Motor neuron (in vitro differentiated cells): ENCODE measurements at regions of chr1 and their contacts with region 1.

Region 1: GRCh38 chr1:78145105-78145580 is 99.4 kb downstream of the GIPC2 start:
- ATAC-seq: peak; percentile 37 to 87 (median 64)
- H3K4me3 ChIP-seq: no peak overlapping the region
- H3K27ac ChIP-seq: no peak overlapping the region
- H3K4me1 ChIP-seq: no peaks in the 10 kb centered on the region

Region 2: DNA sequence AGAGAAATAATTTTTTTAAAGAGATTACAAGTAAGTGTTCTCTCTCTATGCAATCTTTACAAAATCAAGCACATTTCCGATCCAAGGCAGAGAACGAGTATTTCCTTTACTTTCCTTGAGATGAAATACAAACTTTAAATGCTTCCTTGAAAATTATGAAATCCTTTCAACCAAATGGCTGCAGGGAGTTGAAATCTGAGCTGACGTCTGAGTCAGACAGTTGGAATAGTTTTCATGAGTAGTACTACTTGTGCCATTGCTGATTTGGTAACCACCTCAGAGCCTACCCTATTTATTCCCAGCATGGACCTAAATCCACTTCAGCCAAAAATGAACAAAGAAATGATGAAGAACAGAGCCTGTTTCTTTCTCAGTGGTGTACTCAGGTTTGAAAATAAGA is 84.2 kb after region 1 on chr1:
- in situ Hi-C with region 1: no loop called
- ATAC-seq: peak in 1 of 8 experiments; percentile 75
- H3K4me3 ChIP-seq: no peak overlapping the region
- H3K27ac ChIP-seq: no peak overlapping the region
- H3K4me1 ChIP-seq: no peaks in the 10 kb centered on the region

Region 3: DNA sequence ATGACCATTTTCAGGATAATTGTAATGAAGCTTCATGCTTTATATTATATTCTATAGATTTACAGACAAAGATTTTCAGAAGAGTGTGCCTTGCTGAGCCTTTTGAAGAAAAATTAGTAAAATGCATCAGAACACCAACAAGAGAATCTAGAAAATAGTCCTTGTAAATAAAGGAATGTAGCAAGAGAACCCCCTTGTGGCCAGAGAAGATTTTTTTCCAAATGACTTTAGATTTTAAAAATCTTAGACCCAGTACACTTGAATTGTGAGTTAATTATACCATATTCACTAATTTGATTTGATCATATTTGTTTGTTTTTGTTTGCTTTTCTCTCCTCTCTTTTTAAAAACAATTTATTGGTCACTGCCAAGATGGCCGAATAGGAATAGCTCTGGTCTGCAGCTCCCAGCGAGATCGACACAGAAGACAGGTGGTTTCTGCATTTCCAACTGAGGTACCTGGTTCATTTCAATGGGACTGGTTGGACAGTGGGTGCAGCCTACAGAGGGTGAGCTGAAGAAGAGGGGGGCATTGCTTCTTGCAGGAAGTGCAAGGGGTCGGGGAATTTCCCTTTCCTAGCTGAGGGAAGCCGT is 462.3 kb after region 1 on chr1:
- in situ Hi-C with region 1: loop called in 6 of 9 experiments (anchors 10 to 25 kb)
- ATAC-seq: no peak
- H3K4me3 ChIP-seq: no peak overlapping the region
- H3K27ac ChIP-seq: no peak overlapping the region
- H3K4me1 ChIP-seq: no peaks in the 10 kb centered on the region

Region 4: GRCh38 chr1:78617615-78618026 is 472.5 kb after region 1 on chr1:
- in situ Hi-C with region 1: loop called in 2 of 9 experiments (anchors 25 kb)
- ATAC-seq: peak; percentile 40 to 80 (median 64)
- H3K4me3 ChIP-seq: no peak overlapping the region
- H3K27ac ChIP-seq: no peak overlapping the region
- H3K4me1 ChIP-seq: peaks cover 4 to 10% of the 10 kb centered on the region in 2 donors

Region 5: GRCh38 chr1:78676347-78676982 is 531.3 kb after region 1 on chr1:
- in situ Hi-C with region 1: loop called in 1 of 9 experiments (anchors 10 kb)
- ATAC-seq: peak in 4 of 8 experiments; percentile 45 to 80 (median 68)
- H3K4me3 ChIP-seq: no peak overlapping the region
- H3K27ac ChIP-seq: no peak overlapping the region
- H3K4me1 ChIP-seq: peaks cover 0 to 2% of the 10 kb centered on the region in 2 donors